MCF 10A (cell line): ENCODE measurements at regions of chr2 and their contacts with region 1.

Region 1: DNA sequence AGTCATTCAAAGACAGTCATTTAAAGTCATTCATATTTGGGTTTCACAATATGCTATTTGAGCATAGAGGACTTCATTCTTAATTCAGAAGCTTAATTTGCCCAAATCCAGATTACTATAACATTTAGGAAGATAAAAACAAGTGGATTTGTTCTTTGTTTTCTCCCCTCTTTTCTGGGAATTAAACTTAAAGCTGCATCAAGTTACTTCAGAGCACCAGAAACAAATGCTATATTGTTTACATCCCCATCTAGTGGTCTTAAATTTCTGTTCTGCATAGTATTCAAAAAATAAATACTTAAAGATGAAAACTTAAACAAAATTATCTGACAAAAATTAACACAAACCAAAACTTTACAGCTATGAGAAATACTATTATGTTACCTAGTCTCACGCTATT is 34.7 kb upstream of the MARCHF7 start:
- DNase-seq: peak; percentile 9
- H3K4me3 Mint-ChIP-seq: no peak overlapping the region
- H3K27ac Mint-ChIP-seq: no peak overlapping the region
- H3K4me1 Mint-ChIP-seq: peaks cover 2% of the 10 kb centered on the region
- H3K27me3 Mint-ChIP-seq: no peaks in the 10 kb centered on the region
- CTCF ChIP-seq: peak; percentile 32

Region 2: GRCh38 chr2:159557451-159558034 is 120.1 kb before region 1 on chr2:
- CTCF ChIA-PET with region 1: interaction called, 3 read pairs
- POLR2A ChIA-PET with region 1: no interaction called
- intact Hi-C with region 1: loop called (anchors 2 kb)
- DNase-seq: peak; percentile 45
- H3K4me3 Mint-ChIP-seq: no peak overlapping the region
- H3K27ac Mint-ChIP-seq: no peak overlapping the region
- H3K4me1 Mint-ChIP-seq: no peaks in the 10 kb centered on the region
- H3K27me3 Mint-ChIP-seq: no peaks in the 10 kb centered on the region
- CTCF ChIP-seq: peak; percentile 48

Region 3: DNA sequence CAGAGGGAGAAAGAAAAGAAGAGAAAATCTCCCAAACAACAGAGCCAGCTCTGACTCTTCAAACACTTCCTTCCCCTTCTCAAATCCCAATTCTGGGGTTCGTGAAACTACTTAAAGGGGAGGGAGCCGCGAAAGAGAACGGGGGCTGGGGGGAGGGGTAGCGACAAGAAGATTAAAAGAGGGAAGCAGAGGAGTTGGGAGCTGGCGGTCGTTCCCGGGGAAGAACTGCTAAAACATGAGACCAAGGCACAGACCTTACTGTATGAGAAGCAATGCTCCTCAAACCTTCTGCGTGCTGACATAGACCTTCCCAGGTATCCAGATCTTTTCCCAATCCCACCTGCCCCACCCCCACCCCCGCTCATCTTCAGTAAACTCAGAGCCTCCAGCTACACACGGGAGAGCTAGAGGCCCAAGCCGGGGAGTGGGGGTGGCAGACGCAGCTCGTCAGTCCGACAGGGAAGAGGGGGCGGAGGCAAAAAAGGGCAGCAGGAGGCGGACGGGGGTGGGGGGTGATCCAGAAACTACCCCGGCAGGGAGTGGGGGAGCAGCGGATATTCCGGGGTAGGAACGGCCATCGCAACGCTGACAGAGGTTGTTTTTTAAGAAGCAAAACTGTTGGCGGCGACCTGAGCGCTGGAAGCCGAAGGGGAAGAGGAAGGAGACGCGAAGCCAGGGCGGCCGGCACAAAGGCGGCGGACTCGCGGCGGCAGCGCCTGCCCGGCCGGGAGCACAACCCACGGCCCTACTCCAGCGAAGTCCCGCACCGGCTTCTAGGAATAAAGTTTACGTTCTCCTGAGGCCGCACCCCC is 62.3 kb before region 1 on chr2:
- CTCF ChIA-PET with region 1: no interaction called
- POLR2A ChIA-PET with region 1: interaction called, 6 read pairs
- intact Hi-C with region 1: loop called (anchors 2 kb)
- DNase-seq: peak; percentile 95
- H3K4me3 Mint-ChIP-seq: peak overlapping the region; percentile 99
- H3K27ac Mint-ChIP-seq: peak overlapping the region; percentile 98
- H3K4me1 Mint-ChIP-seq: peaks cover 15% of the 10 kb centered on the region
- H3K27me3 Mint-ChIP-seq: no peaks in the 10 kb centered on the region
- CTCF ChIP-seq: no peak